Activated CD4-positive, alpha-beta T cell treated with anti-CD3 and anti-CD28 coated beads for 36 hours (primary cell): ENCODE measurements at regions of chr15 and their contacts with region 1.

Region 1: GRCh38 chr15:92917606-92918407 is 17.7 kb downstream of the CHD2 start:
- DNase-seq: peak; percentile 96
- ATAC-seq: peak; percentile 10
- H3K4me3 Mint-ChIP-seq: peak overlapping the region; percentile 20
- H3K27ac Mint-ChIP-seq: peak overlapping the region; percentile 84
- H3K4me1 Mint-ChIP-seq: peaks cover 86% of the 10 kb centered on the region
- H3K27me3 Mint-ChIP-seq: no peaks in the 10 kb centered on the region

Region 2: GRCh38 chr15:92365067-92365466 is 552.7 kb before region 1 on chr15:
- CTCF ChIA-PET with region 1: no interaction called
- POLR2A ChIA-PET with region 1: no interaction called
- intact Hi-C with region 1: no loop called
- DNase-seq: no peak
- ATAC-seq: no peak
- H3K4me3 Mint-ChIP-seq: no peak overlapping the region
- H3K27ac Mint-ChIP-seq: no peak overlapping the region
- H3K4me1 Mint-ChIP-seq: no peaks in the 10 kb centered on the region
- H3K27me3 Mint-ChIP-seq: peaks cover 2% of the 10 kb centered on the region

Region 3: GRCh38 chr15:92480381-92480780 is 437.4 kb before region 1 on chr15:
- CTCF ChIA-PET with region 1: no interaction called
- POLR2A ChIA-PET with region 1: no interaction called
- intact Hi-C with region 1: no loop called
- DNase-seq: no peak
- ATAC-seq: no peak
- H3K4me3 Mint-ChIP-seq: no peak overlapping the region
- H3K27ac Mint-ChIP-seq: no peak overlapping the region
- H3K4me1 Mint-ChIP-seq: no peaks in the 10 kb centered on the region
- H3K27me3 Mint-ChIP-seq: peaks cover 9% of the 10 kb centered on the region

Region 4: DNA sequence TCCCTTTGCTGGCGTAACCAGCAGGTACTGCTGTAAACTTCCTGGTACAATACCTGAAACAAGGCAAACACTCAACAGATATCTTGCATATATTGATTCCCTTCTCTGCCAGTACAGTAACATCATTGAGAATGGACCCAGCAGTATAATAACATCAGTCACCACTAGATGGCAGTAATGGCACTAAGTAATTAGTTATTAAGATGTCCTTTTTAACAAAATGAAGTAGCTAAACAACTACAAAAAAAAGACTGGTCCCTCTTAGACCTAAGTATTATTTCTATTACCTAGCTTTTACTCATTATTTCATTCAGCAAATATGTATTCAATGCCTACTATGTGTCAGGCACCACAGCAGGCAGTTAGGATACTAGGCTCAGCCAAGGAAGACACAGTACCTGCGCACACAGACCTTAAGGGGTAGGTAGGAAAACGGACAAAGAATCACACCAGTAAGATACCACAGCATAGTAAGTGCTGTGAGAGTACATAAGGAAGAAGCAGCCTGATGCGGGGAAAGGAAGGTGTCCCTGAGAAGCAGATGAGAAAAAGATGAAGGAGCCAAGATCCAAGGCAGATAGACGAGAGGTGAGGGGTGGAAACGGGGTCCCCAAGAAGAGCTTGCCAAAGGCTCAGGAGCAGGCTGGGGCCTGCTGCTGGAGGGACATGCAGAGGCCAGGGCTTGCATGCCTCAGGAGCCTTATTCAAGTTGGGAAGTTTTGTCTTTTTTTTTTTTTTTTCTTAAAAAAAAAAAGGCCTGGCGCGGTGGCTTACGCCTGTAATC is 120.4 kb before region 1 on chr15:
- CTCF ChIA-PET with region 1: interaction called, 87 read pairs
- POLR2A ChIA-PET with region 1: interaction called, 3 read pairs
- intact Hi-C with region 1: loop called (anchors 1 kb)
- DNase-seq: no peak
- ATAC-seq: peak; percentile 90
- H3K4me3 Mint-ChIP-seq: no peak overlapping the region
- H3K27ac Mint-ChIP-seq: peak overlapping the region; percentile 65
- H3K4me1 Mint-ChIP-seq: peaks cover 8% of the 10 kb centered on the region
- H3K27me3 Mint-ChIP-seq: no peaks in the 10 kb centered on the region

Region 5: GRCh38 chr15:92808978-92809879 is 108.6 kb before region 1 on chr15:
- CTCF ChIA-PET with region 1: interaction called, 35 read pairs
- POLR2A ChIA-PET with region 1: interaction called, 12 read pairs
- intact Hi-C with region 1: loop called (anchors 1 kb)
- DNase-seq: peak; percentile 99
- ATAC-seq: peak; percentile 82
- H3K4me3 Mint-ChIP-seq: peak overlapping the region; percentile 88
- H3K27ac Mint-ChIP-seq: peak overlapping the region; percentile 99
- H3K4me1 Mint-ChIP-seq: peaks cover 43% of the 10 kb centered on the region
- H3K27me3 Mint-ChIP-seq: no peaks in the 10 kb centered on the region

Region 6: DNA sequence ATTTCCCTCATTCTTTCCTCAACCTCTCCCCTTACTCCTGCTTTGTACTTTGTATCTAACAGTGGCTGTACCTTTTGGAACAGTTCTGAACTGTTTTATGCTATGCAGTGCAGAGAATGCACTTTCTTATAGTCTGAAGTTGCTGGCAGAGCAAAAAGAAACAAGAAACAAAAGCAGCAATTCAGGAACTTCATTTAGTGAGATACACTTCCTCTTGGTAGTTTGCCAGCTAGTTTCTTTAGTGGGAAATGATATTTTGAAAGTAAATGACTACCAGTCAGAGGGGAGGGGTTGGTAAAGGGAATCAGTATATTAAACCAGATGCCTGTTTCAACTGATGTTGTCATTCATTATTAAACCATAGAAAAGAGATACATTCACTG is 72.7 kb before region 1 on chr15:
- CTCF ChIA-PET with region 1: interaction called, 6 read pairs
- POLR2A ChIA-PET with region 1: no interaction called
- intact Hi-C with region 1: loop called in 1 of 2 experiments (anchors 2 kb)
- DNase-seq: no peak
- ATAC-seq: peak; percentile 43
- H3K4me3 Mint-ChIP-seq: peak overlapping the region; percentile 57
- H3K27ac Mint-ChIP-seq: peak overlapping the region; percentile 99
- H3K4me1 Mint-ChIP-seq: peaks cover 79% of the 10 kb centered on the region
- H3K27me3 Mint-ChIP-seq: no peaks in the 10 kb centered on the region

Region 7: DNA sequence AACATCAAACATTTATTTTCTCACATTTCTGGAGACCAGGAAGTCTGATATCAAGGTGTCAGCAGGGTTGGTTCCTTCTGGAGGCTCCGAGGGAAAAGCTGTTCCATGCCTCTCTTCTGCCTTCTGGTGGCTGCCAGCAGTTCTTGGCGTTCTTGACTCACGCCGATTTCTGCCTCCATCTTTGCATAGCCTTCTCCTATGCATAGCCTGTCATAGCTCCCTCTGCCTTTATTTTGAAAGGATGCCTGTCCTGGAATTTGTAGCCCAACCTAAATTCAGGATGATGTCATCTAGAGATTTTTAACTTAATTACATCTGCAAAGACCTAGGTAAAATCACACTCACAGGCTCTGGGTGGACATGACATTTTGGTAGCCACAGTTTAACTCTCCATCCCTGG is 100.8 kb after region 1 on chr15:
- CTCF ChIA-PET with region 1: no interaction called
- POLR2A ChIA-PET with region 1: no interaction called
- intact Hi-C with region 1: loop called in 1 of 2 experiments (anchors 10 kb)
- DNase-seq: no peak
- ATAC-seq: no peak
- H3K4me3 Mint-ChIP-seq: no peak overlapping the region
- H3K27ac Mint-ChIP-seq: peak overlapping the region; percentile 80
- H3K4me1 Mint-ChIP-seq: peaks cover 71% of the 10 kb centered on the region
- H3K27me3 Mint-ChIP-seq: no peaks in the 10 kb centered on the region